Activated naive CD4-positive, alpha-beta T cell treated with anti-CD3 and anti-CD28 coated beads for 36 hours (primary cell): ENCODE measurements at regions of chr5 and their contacts with region 1.

Region 1: GRCh38 chr5:6483880-6484382 is 35.3 kb downstream of the UBE2QL1 start:
- DNase-seq: peak; percentile 28
- H3K4me3 Mint-ChIP-seq: no peak overlapping the region
- H3K27ac Mint-ChIP-seq: no peak overlapping the region
- H3K4me1 Mint-ChIP-seq: peaks cover 35% of the 10 kb centered on the region
- H3K27me3 Mint-ChIP-seq: peaks cover 2% of the 10 kb centered on the region

Region 2: GRCh38 chr5:6496207-6496584 is 12.3 kb after region 1 on chr5:
- CTCF ChIA-PET with region 1: no interaction called
- intact Hi-C with region 1: loop called (anchors 1 kb)
- DNase-seq: peak; percentile 37
- H3K4me3 Mint-ChIP-seq: no peak overlapping the region
- H3K27ac Mint-ChIP-seq: no peak overlapping the region
- H3K4me1 Mint-ChIP-seq: peaks cover 10% of the 10 kb centered on the region
- H3K27me3 Mint-ChIP-seq: peaks cover 5% of the 10 kb centered on the region